ENCODE measurements at regions of chr14 and their contacts with region 1.

Region 1: GRCh38 chr14:103520657-103521437 is 1.8 kb downstream of the CKB start:
- DNase-seq: peak; percentile 57 to 77 (median 65)
- H3K4me3 ChIP-seq: peak overlapping the region; percentile 28
- H3K4me3 Mint-ChIP-seq: peak overlapping the region; percentile 48 to 66 (median 57)
- H3K27ac ChIP-seq: no peak overlapping the region
- H3K27ac Mint-ChIP-seq: peak overlapping the region in 1 of 8 donors; percentile 38
- H3K4me1 ChIP-seq: peaks cover 13% of the 10 kb centered on the region
- H3K4me1 Mint-ChIP-seq: peaks cover 0 to 12% (median 5%) of the 10 kb centered on the region in 3 donors
- H3K27me3 ChIP-seq: no peaks in the 10 kb centered on the region
- H3K27me3 Mint-ChIP-seq: peaks cover 4 to 9% of the 10 kb centered on the region in 2 donors

Region 2: DNA sequence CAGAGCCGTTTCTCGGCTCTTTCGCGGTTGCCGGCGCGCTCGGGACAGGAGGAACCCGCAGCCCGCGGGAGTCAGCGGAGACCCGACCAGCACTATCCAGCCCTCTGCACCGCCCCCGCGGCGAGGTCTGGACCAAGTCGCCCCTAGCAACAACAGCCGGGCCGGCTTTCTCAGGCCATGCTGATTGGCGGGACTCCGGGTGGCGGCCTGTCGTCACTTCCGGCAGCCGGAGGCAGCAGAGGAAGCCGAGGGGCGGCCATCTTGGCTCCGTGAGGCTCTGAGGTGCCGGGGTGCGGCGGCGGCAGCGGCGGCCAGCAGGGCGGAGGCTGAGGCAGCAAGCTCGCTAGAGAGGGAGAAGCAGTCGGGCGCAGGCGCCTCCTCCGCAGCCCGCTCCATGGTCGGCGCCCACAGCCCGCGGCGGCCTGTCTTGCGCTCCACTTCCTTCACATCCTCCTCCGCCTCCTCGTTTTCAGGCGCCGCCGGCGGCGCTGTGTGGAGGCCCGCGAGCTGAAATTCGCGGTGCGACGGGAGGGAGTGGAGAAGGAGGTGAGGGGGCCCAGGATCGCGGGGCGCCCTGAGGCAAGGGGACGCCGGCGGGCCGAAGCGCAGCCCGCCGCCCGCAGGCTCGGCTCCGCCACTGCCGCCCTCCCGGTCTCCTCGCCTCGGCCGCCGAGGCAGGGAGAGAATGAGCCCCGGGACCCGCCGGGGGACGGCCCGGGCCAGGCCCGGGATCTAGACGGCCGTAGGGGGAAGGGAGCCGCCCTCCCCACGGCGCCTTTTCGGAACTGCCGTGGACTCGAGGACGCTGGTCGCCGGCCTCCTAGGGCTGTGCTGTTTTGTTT is 135.5 kb before region 1 on chr14 and contains the start of gene MARK3:
- CTCF ChIA-PET with region 1: no interaction called
- POLR2A ChIA-PET with region 1: no interaction called
- DNase-seq: peak; percentile 94 to 97 (median 96)
- H3K4me3 ChIP-seq: peak within 1 kb of the TSS; percentile 88
- H3K4me3 Mint-ChIP-seq: peak within 1 kb of the TSS; percentile 95 to 99 (median 98)
- H3K27ac ChIP-seq: peak within 1 kb of the TSS; percentile 87
- H3K27ac Mint-ChIP-seq: peak within 1 kb of the TSS; percentile 93 to 99 (median 96)
- H3K4me1 ChIP-seq: peaks cover 36% of the 10 kb centered on the region
- H3K4me1 Mint-ChIP-seq: peaks cover 30 to 47% (median 40%) of the 10 kb centered on the region in 3 donors
- H3K27me3 ChIP-seq: no peaks in the 10 kb centered on the region
- H3K27me3 Mint-ChIP-seq: peaks cover 1 to 4% of the 10 kb centered on the region in 2 donors
- total RNA-seq, gene MARK3: 91.9 to 92.7 TPM

Region 3: DNA sequence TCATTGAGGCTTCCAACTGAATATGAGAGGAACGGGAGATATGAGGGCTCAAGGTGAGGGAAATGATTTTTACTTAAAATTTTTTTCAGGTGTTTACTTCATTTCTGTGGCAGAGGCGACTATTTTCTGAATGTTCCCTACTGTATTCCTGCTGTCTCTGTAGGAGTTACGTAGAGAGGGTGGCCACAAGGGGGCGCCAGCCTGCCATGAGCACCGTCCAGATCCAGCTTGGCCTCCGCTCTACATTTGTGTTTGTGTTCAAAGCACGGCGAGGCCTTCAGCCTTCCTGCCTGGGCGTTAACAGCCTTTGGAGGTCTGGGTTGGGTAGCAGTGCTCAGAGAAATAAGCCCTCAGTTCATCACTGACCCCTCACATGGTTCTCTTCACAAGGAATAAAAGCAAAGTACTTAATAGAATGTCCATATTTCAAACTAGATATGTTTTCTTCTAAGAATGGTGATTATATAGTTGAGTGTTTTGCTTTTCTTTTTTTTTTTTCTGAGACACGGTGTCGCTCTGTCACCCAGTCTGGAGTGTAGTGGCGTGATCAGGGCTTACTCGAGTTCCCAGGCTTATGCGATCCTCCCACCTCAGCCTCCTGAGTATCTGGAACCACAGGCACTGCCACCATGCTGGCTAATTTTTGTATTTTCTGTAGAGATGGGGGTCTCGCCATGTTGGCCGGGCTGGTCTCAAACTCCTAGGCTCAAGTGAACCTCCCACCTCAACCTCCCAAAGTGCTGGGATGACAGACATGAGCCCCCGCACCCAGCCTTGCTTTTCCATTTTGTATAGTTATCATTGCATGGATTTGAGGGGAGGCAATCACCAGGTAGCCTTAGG is 20.5 kb before region 1 on chr14:
- CTCF ChIA-PET with region 1: interaction called, 20 read pairs
- POLR2A ChIA-PET with region 1: no interaction called
- DNase-seq: peak; percentile 64 to 80 (median 73)
- H3K4me3 ChIP-seq: no peak overlapping the region
- H3K4me3 Mint-ChIP-seq: no peak overlapping the region
- H3K27ac ChIP-seq: no peak overlapping the region
- H3K27ac Mint-ChIP-seq: peak overlapping the region in 3 of 8 donors; percentile 30 to 88 (median 83)
- H3K4me1 ChIP-seq: peaks cover 4% of the 10 kb centered on the region
- H3K4me1 Mint-ChIP-seq: peaks cover 8 to 13% (median 9%) of the 10 kb centered on the region in 3 donors
- H3K27me3 ChIP-seq: no peaks in the 10 kb centered on the region
- H3K27me3 Mint-ChIP-seq: no peaks in the 10 kb centered on the region

Region 4: DNA sequence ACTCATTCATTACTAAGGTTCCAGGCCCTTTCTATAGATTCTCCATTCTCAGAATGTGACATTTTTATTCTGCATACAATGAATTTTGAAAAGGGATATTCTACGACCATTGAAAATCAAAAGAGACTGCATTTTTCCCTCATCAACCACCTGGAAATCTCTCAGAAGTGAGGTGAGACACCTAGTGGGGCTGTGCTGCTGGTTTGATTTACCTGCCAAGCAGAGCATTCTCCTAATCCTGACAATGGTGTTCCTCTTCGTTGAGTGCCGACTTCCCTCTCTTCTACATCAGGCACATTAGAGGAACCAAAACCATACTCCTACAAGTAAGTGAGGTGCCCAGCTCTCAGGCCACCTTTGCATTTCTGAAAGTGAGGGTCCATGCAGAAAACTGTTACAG is 13.1 kb before region 1 on chr14:
- CTCF ChIA-PET with region 1: interaction called, 20 read pairs
- POLR2A ChIA-PET with region 1: no interaction called
- DNase-seq: no peak
- H3K4me3 ChIP-seq: no peak overlapping the region
- H3K4me3 Mint-ChIP-seq: no peak overlapping the region
- H3K27ac ChIP-seq: no peak overlapping the region
- H3K27ac Mint-ChIP-seq: no peak overlapping the region
- H3K4me1 ChIP-seq: no peaks in the 10 kb centered on the region
- H3K4me1 Mint-ChIP-seq: peaks cover 0 to 3% (median 0%) of the 10 kb centered on the region in 3 donors
- H3K27me3 ChIP-seq: no peaks in the 10 kb centered on the region
- H3K27me3 Mint-ChIP-seq: no peaks in the 10 kb centered on the region

Region 5: DNA sequence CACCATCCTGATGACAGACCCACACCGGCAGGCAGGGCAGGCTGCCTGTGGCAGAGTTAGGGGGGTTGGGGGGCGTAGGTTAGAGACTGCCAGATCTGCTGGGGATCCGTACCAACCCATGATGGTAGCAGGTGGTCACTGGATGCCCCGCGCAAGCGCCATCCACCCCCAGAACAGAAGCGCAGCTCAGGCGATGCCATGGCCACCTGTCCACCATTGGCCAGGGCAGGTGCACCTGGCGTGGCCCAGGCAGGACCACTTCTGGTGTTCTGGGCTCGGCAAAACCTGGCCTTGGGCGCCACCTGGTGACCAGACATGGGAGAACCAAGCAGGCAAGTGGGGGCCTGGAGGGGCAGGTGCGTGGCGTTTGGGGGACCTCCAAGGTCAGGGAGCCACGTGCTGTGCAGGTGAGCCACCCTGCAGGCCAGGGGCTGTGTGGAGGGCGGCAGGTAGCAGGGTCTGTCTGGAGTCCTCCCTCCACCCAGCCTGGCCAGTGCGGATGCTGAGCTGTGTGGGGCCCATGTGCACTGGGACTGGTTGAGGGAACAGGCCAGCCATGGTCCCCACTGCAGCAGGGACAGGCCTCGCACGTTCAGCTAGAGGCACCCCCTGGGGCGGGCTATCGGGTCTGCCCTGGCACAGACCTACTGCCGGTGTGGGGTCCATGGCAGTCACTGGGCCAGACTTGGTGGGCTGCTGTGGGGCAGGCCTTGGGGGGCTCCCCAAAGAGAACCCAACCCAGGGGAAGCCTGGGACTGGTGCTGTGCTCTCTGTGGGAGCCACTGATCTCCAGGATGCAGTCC is 26.0 kb after region 1 on chr14:
- CTCF ChIA-PET with region 1: interaction called, 61 read pairs
- POLR2A ChIA-PET with region 1: no interaction called
- DNase-seq: peak; percentile 65 to 82 (median 73)
- H3K4me3 ChIP-seq: no peak overlapping the region
- H3K4me3 Mint-ChIP-seq: no peak overlapping the region
- H3K27ac ChIP-seq: no peak overlapping the region
- H3K27ac Mint-ChIP-seq: no peak overlapping the region
- H3K4me1 ChIP-seq: no peaks in the 10 kb centered on the region
- H3K4me1 Mint-ChIP-seq: peaks cover 0 to 10% (median 4%) of the 10 kb centered on the region in 3 donors
- H3K27me3 ChIP-seq: no peaks in the 10 kb centered on the region
- H3K27me3 Mint-ChIP-seq: no peaks in the 10 kb centered on the region

Measured in CD8-positive, alpha-beta memory T cell (primary cell).